ENCODE measurements at regions of chr4 and their contacts with region 1.

Region 1: DNA sequence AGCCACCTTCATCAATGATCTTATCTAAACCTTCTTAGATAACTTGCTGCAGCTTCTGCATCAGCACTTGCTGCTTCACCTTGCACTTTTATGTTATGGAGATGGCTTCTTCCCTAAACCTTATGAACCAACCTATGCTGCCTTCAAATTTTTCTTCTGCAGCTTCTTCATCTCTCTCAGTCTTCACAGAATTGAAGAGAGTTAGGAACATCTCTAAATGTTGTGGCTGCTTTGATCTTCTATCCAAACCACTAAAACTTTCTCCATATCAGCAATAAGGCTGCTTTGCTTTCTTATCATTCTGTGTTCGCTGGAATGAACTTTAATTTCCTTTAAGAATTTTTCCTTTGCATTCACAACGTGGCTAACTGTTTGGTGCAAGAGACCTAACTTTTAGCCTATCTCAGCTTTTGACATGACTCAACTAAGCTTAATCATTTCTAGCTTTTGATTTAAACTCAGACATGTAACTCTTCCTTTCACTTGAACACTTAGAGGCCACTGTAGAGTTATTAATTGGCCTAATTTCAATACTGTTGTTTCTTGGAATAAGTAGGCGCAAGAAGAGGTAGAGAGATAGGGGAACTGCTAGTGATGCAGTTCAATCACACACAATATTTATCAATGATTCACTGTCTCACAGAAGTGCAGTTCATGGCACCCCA is 36.1 kb upstream of the CORIN start:
- DNase-seq: no peak
- H3K4me3 Mint-ChIP-seq: no peak overlapping the region
- H3K27ac Mint-ChIP-seq: peak overlapping the region; percentile 61
- H3K4me1 Mint-ChIP-seq: peaks cover 20% of the 10 kb centered on the region
- H3K27me3 Mint-ChIP-seq: no peaks in the 10 kb centered on the region

Region 2: GRCh38 chr4:47891928-47892327 is 17.9 kb after region 1 on chr4:
- CTCF ChIA-PET with region 1: no interaction called
- POLR2A ChIA-PET with region 1: no interaction called
- intact Hi-C with region 1: loop called (anchors 2 kb)
- DNase-seq: no peak
- H3K4me3 Mint-ChIP-seq: no peak overlapping the region
- H3K27ac Mint-ChIP-seq: no peak overlapping the region
- H3K4me1 Mint-ChIP-seq: peaks cover 10% of the 10 kb centered on the region
- H3K27me3 Mint-ChIP-seq: no peaks in the 10 kb centered on the region